ENCODE measurements at regions of chr20 and their contacts with region 1.

Region 1: GRCh38 chr20:38893565-38894090 is 32.6 kb upstream of the FAM83D start:
- DNase-seq: peak; percentile 81
- H3K4me3 ChIP-seq: peak overlapping the region; percentile 52
- H3K27ac ChIP-seq: peak overlapping the region; percentile 91
- H3K4me1 ChIP-seq: peaks cover 53% of the 10 kb centered on the region
- CTCF ChIP-seq: peak; percentile 86

Region 2: DNA sequence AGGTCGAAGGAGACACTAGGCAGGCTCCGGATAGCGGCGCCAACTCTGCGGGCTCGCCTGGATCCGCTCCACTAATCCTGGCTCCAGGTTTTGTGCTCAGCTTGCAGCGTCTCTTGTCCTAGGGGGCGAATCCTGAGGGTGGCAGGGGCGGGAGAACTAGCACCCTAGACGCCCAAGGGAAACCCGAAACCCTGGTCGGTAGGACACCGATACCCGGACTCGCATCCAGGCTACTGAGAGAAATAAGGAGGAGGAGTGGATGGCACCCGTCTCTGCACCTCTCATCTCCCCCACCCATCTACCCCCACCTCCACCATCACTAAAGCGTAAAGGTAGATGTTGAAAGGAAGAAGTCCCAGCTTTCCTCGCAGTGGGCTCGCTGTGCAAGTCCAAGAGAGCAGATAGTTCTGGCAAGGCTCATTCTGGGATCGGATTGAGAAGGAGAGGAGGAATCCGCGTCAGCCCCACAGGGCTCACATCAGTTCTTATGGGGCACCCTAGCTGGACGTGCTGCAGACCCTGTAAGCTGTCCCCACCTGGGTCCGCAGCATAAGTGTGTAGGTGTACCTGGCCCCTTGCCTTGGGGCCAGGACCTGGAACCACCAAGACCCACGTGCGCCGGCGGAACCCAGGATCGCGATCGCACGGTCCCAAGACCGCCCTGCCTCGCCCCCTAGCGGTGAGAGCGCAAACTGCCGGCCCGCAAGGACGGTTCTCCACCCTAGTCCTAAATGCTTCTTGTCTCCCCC is 162.5 kb before region 1 on chr20:
- CTCF ChIA-PET with region 1: no interaction called
- POLR2A ChIA-PET with region 1: no interaction called
- intact Hi-C with region 1: loop called (anchors 5 kb)
- DNase-seq: peak; percentile 81
- H3K4me3 ChIP-seq: peak overlapping the region; percentile 70
- H3K27ac ChIP-seq: peak overlapping the region; percentile 17
- H3K4me1 ChIP-seq: peaks cover 4% of the 10 kb centered on the region
- CTCF ChIP-seq: peak; percentile 97

Region 3: GRCh38 chr20:38805502-38805957 is 88.1 kb before region 1 on chr20 and contains the start of gene PPP1R16B:
- CTCF ChIA-PET with region 1: interaction called, 6 read pairs
- POLR2A ChIA-PET with region 1: interaction called, 17 read pairs
- intact Hi-C with region 1: loop called (anchors 1 kb)
- DNase-seq: peak; percentile 90
- H3K4me3 ChIP-seq: peak within 1 kb of the TSS; percentile 98
- H3K27ac ChIP-seq: peak within 1 kb of the TSS; percentile 79
- H3K4me1 ChIP-seq: peaks cover 51% of the 10 kb centered on the region
- CTCF ChIP-seq: no peak
- total RNA-seq, gene PPP1R16B: 44.3 and 49.7 TPM in 2 replicates

Region 4: GRCh38 chr20:38863024-38863851 is 30.4 kb before region 1 on chr20:
- CTCF ChIA-PET with region 1: interaction called, 22 read pairs
- POLR2A ChIA-PET with region 1: interaction called, 29 read pairs
- intact Hi-C with region 1: loop called (anchors 1 kb)
- DNase-seq: peak; percentile 87
- H3K4me3 ChIP-seq: peak overlapping the region; percentile 27
- H3K27ac ChIP-seq: peak overlapping the region; percentile 86
- H3K4me1 ChIP-seq: peaks cover 95% of the 10 kb centered on the region
- CTCF ChIP-seq: no peak

Region 5: GRCh38 chr20:38883081-38883980 is 10.3 kb before region 1 on chr20:
- CTCF ChIA-PET with region 1: interaction called, 34 read pairs
- POLR2A ChIA-PET with region 1: interaction called, 85 read pairs
- intact Hi-C with region 1: loop called (anchors 1 kb)
- DNase-seq: peak; percentile 63
- H3K4me3 ChIP-seq: peak overlapping the region; percentile 36
- H3K27ac ChIP-seq: peak overlapping the region; percentile 97
- H3K4me1 ChIP-seq: peaks cover 81% of the 10 kb centered on the region
- CTCF ChIP-seq: peak; percentile 63

Region 6: GRCh38 chr20:38968090-38968489 is 74.5 kb after region 1 on chr20:
- CTCF ChIA-PET with region 1: no interaction called
- POLR2A ChIA-PET with region 1: no interaction called
- intact Hi-C with region 1: no loop called
- DNase-seq: no peak
- H3K4me3 ChIP-seq: no peak overlapping the region
- H3K27ac ChIP-seq: no peak overlapping the region
- H3K4me1 ChIP-seq: peaks cover 8% of the 10 kb centered on the region
- CTCF ChIP-seq: no peak

Region 7: DNA sequence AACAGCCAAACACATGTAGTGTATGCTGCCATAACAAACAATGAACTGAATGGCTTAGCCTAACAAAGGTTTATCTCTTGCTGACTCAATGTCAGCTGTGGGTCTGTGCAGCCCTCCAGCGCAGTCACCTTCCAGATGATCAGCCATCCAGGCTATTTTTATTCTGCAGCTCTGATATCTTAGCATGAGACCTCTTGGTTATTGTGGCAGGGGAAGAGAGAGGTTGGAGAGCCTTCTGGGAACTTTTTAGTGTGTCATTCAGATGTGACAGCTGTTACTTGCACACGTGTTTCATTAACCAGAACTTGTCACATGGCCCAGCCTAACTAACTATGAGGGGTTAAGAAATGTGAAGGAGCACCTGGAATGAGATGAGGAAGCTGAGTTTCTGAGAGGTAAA is 271.0 kb after region 1 on chr20:
- CTCF ChIA-PET with region 1: no interaction called
- POLR2A ChIA-PET with region 1: no interaction called
- intact Hi-C with region 1: no loop called
- DNase-seq: no peak
- H3K4me3 ChIP-seq: no peak overlapping the region
- H3K27ac ChIP-seq: no peak overlapping the region
- H3K4me1 ChIP-seq: no peaks in the 10 kb centered on the region
- CTCF ChIP-seq: no peak